Right ventricle myocardium inferior (tissue), 1 donor: ENCODE measurements at regions of chr6 and their contacts with region 1.

Region 1: GRCh38 chr6:3125815-3126214 is 7.3 kb downstream of the BPHL start:
- DNase-seq: no peak
- ATAC-seq: no peak

Region 2: DNA sequence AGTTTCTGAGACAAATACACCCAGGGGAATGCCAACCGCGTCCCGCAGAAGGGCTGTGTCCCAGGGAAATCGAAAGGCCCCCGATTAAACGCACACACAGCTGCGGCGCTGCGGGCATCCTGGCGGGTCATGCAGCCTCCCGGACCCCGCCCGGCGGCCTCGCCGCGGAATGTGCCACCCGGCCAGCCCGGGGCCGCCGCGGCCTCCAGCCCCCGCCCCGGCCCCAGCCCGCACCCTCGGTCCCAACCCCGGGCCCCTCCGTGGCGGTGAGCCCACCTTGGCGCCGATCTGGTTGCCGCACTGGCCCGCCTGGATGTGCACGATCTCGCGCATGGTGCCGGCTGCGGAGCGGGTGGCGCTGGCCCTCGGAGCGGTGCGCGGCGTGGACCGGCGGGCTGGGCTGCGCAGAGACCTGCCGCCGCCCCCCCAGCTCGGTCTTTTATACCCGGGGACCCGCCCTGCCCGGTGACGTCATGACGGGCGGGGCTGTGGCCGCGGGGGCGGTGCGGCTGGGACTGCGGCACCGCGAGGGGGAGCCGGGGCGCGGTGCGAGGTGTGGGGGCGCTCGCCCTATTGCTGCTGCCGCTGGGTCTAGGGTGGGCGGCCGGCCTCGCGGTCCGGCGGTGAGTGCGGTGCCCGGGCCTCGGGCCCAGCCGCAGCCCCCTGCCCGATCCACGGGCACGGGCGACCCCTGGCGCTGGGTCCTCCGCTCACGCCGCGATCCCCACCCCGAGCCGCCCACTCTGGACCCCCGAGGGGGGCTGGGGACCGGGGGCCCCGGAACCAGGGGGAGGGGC is 31.5 kb after region 1 on chr6 and contains the start of gene TUBB2A:
- intact Hi-C with region 1: loop called (anchors 2 kb)
- DNase-seq: peak; percentile 93
- ATAC-seq: peak; percentile 93
- total RNA-seq, gene TUBB2A: 25.0 TPM

Region 3: DNA sequence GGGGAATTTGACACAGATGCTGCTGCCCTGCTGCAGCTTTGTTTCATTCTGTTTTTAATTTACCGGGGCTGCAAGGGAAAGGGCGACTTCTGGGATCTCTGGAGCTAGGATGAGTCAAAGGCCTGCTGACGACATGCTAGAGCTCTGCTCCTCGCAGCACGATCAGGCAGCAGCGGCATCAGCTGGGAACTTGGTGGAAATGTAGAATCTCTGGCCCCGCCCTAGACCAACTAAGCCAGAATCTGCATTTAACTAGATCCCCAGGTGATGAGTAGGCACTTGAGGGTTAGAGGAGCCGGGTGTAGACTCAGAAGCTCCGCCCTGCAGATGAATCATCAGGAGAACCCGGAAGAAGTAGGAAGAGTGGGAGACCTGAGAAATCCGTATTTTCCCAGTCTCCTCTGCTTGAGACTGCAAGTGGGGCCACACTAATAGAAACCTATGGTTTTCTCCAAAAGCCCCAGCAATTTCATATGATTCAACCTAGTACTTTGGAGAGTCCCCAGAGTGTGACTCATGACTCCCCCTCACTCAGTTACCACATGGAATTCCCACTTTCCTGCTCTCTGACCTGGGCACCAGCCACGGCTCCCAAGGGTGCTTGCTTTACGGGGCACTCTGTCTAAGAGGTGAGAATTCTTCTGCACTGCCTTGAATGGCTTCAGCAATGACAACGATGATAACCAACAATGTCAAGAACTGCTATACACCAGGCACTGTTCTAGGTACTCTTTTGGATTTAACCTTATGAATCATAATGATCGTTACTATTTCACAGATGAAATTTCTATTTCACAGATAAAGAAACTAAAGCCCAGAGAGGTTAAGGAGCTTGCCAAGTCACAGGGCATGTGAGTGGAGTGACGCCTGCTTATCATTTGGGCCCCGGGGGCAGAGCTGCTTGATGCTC is 83.6 kb after region 1 on chr6:
- intact Hi-C with region 1: no loop called
- DNase-seq: no peak
- ATAC-seq: peak; percentile 56

Region 4: DNA sequence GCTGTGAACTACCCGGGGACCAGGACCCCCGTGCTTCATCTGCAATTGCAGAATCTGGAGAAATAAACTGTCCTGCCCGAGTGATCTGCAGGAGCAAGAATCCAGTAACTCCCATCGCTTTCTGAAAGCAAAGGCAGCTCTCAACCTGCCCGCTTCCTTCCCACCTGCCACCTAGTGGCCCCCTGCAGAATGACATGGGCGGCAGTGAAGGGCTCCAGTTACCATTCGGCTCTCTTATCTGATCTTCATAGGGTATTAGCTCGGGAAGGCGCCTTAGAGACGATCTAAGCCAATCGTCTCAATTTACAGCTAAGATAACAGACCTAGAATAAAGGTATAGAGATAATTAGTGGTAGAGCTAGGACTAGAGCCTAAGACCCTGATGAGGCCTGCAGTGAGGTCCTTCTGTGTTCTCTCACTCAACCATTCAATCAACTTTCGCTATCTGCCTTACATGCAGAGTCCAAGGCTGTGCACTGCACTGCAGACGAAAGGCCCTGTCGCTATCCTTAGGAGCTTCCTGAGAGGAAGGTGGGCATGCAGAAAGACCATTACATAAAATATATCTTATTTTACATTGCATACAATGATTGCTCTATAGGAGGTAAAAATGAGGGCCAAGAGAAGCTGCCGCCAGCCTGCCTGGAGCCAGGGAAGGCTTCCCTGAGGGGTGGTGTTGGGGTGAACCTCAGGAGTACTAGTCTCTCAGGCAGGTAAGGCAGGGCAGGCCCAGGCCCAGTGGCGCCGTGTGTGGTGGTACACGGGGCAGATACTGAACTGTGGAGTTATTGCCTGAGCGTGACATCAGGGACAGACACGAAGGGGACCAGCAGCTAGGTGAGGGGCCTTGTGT is 125.9 kb after region 1 on chr6:
- intact Hi-C with region 1: loop called (anchors 1 kb)
- DNase-seq: peak; percentile 87
- ATAC-seq: peak; percentile 80

Region 5: DNA sequence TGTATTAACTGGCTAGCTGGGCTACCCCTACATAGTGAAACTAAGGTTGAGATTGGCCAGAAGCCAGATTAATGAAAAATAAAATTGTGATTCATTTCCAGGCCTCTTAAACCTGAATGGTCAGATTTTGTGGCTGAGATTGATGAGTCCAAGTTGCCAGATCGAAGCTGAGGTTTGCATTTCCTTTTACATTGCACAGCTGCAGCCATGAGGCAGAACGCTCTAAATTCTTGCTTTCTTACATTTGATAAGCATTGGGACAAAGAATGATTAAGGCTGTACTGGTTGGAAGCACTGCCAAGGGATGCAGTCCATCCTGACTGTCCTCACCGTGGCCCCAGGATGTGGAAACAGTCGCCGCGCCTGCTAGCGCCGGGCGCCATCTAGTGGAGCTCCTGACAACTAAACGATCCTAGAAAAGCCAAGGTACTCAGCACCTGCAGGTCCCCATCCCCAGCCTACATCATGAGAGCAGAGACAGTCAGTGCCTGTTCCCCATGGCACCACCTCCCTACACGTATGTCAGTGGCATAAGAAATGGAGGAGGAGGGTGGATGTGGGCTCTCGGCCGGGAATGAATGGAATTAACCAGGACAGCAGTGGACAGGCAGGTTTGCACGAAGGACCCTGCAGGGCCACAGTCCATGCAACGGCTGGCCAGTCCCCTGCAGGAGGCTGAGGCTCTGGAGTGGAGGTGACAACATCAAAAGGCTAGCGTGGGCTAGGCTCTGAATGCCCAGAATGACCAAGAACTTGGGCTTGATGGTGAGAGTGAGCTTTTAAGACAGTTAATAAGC is 606.7 kb after region 1 on chr6:
- intact Hi-C with region 1: loop called (anchors 10 kb)
- DNase-seq: peak; percentile 87
- ATAC-seq: peak; percentile 75